Natural killer cell (primary cell): ENCODE measurements at regions of chr2 and their contacts with region 1.

Region 1: DNA sequence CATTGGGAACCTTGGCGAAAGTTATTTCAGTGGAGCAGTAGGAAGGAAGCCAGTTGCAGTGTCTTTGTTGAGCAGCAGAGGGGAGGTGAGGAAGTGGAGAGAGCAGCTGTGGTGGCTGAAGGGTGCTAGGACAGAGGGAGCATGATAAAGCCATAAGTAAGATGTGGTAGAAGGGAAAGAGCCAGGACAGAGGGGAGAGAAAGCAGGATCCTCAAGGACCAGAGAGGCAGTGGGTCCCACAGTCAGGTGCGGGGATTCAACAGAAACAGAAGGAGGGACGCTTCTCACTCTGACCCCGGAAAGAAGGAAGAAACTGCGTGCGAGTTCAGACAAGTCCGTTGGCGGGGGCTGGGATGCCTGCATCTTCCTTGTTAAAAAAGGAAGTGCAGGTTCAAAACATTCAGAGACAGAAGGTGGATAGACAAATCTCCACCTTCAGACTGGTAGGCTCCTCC is at the start of gene CXCR2:
- DNase-seq: no peak
- ATAC-seq: peak; percentile 33 to 65 (median 49)
- H3K4me3 ChIP-seq: peak within 1 kb of the TSS; percentile 3
- H3K4me3 Mint-ChIP-seq: peak within 1 kb of the TSS; percentile 87
- H3K27ac ChIP-seq: peak within 1 kb of the TSS; percentile 61
- H3K27ac Mint-ChIP-seq: peak within 1 kb of the TSS; percentile 90 to 93
- H3K4me1 ChIP-seq: peaks cover 59% of the 10 kb centered on the region
- H3K4me1 Mint-ChIP-seq: peaks cover 56 to 58% of the 10 kb centered on the region in 2 donors
- H3K27me3 ChIP-seq: no peaks in the 10 kb centered on the region
- H3K27me3 Mint-ChIP-seq: no peaks in the 10 kb centered on the region
- CTCF ChIP-seq: no peak
- total RNA-seq, gene CXCR2: 24.3 to 35.3 (median 25.8) TPM

Region 2: DNA sequence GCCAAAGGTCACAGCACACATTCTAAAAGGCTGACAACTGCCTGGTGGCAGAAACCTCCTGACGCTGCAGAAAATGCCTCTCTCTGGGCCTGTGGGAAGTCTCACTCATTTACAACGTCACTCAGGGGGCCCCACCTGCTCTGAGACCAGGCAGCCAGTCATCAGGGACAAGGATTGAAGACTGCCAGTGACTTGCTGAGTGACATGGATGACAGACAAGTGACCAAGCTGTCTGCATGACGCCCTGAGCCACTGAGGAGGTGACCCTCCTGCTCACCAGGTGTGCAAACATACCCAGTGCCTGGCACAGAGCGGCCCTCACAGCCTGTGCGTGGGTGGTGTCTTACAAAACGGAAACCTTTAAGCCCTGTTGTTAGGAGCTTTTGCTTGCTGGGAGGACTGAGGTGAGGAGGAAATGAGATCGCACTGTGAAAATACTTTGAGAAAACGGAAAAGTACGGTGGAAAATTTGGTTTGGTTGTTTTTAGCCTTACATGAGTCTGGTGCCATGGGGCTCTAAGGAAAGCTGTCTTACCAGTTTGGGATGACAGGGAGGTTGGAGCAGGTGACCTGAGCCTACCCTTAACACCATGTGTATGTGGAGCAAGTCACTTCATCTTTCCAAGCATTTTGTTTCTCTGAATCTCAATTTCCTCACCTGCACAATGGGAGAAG is 515.1 kb before region 1 on chr2:
- intact Hi-C with region 1: no loop called
- DNase-seq: peak in 1 of 2 donors; percentile 58
- ATAC-seq: peak in 2 of 3 donors; percentile 26 to 46
- H3K4me3 ChIP-seq: no peak overlapping the region
- H3K4me3 Mint-ChIP-seq: no peak overlapping the region
- H3K27ac ChIP-seq: no peak overlapping the region
- H3K27ac Mint-ChIP-seq: peak overlapping the region; percentile 27 to 30
- H3K4me1 ChIP-seq: peaks cover 16% of the 10 kb centered on the region
- H3K4me1 Mint-ChIP-seq: peaks cover 23% of the 10 kb centered on the region in 2 donors
- H3K27me3 ChIP-seq: no peaks in the 10 kb centered on the region
- H3K27me3 Mint-ChIP-seq: no peaks in the 10 kb centered on the region
- CTCF ChIP-seq: no peak

Region 3: GRCh38 chr2:217902379-217903141 is 223.1 kb before region 1 on chr2:
- intact Hi-C with region 1: no loop called
- DNase-seq: peak in 1 of 2 donors; percentile 13
- ATAC-seq: peak; percentile 57 to 76 (median 70)
- H3K4me3 ChIP-seq: no peak overlapping the region
- H3K4me3 Mint-ChIP-seq: no peak overlapping the region
- H3K27ac ChIP-seq: no peak overlapping the region
- H3K27ac Mint-ChIP-seq: no peak overlapping the region
- H3K4me1 ChIP-seq: peaks cover 19% of the 10 kb centered on the region
- H3K4me1 Mint-ChIP-seq: peaks cover 0 to 20% of the 10 kb centered on the region in 2 donors
- H3K27me3 ChIP-seq: no peaks in the 10 kb centered on the region
- H3K27me3 Mint-ChIP-seq: peaks cover 10 to 16% of the 10 kb centered on the region in 2 donors
- CTCF ChIP-seq: no peak

Region 4: GRCh38 chr2:218168635-218169462 is 43.2 kb after region 1 on chr2:
- intact Hi-C with region 1: loop called (anchors 2 kb)
- DNase-seq: peak; percentile 62 to 85
- ATAC-seq: peak; percentile 71 to 76 (median 76)
- H3K4me3 ChIP-seq: no peak overlapping the region
- H3K4me3 Mint-ChIP-seq: peak overlapping the region; percentile 35
- H3K27ac ChIP-seq: no peak overlapping the region
- H3K27ac Mint-ChIP-seq: peak overlapping the region; percentile 89 to 92
- H3K4me1 ChIP-seq: peaks cover 47% of the 10 kb centered on the region
- H3K4me1 Mint-ChIP-seq: peaks cover 55 to 59% of the 10 kb centered on the region in 2 donors
- H3K27me3 ChIP-seq: no peaks in the 10 kb centered on the region
- H3K27me3 Mint-ChIP-seq: peaks cover 0 to 2% of the 10 kb centered on the region in 2 donors
- CTCF ChIP-seq: peak; percentile 71

Region 5: DNA sequence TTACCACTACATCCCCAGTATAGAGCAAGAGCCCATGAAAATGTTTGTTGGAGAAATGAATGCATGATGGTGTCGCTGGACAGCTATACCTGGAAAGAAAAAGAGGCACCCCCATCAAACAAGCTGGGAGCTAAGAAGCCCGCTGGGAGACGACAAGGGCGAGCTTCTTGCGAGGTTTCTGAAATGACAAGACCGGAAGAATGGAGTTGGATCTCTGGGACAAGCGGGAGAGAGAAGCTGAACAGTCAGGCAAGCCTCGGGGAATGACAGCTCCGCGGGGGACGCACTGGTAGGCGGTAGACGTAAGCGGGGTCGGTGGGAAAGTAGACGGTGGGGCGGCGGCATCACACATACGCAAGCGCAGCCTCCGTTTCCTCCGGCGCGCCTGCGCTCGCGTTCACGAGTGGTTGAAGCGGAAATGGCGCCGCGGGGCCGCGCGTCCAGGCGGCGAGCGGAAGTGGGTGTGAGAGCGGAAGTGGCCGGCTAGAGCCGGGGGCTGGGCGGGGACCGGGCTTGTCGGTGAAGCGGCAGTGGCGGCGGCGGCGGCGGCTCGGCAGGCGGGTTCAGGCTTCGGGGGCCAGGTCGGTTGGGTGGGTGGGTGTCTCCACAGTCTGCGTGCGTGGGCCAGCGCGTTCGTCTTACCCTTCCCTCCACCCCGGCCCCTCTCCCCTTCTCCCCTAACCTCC is 91.2 kb after region 1 on chr2 and contains the start of gene ARPC2:
- intact Hi-C with region 1: loop called (anchors 5 kb)
- DNase-seq: peak; percentile 97 to 98
- ATAC-seq: peak; percentile 81 to 92 (median 87)
- H3K4me3 ChIP-seq: peak within 1 kb of the TSS; percentile 100
- H3K4me3 Mint-ChIP-seq: peak within 1 kb of the TSS; percentile 96
- H3K27ac ChIP-seq: peak within 1 kb of the TSS; percentile 100
- H3K27ac Mint-ChIP-seq: peak within 1 kb of the TSS; percentile 98 to 99
- H3K4me1 ChIP-seq: peaks cover 31% of the 10 kb centered on the region
- H3K4me1 Mint-ChIP-seq: peaks cover 46 to 48% of the 10 kb centered on the region in 2 donors
- H3K27me3 ChIP-seq: no peaks in the 10 kb centered on the region
- H3K27me3 Mint-ChIP-seq: no peaks in the 10 kb centered on the region
- CTCF ChIP-seq: no peak
- total RNA-seq, gene ARPC2: 824 to 880 (median 830) TPM